PC-9 (cell line): ENCODE measurements at regions of chr6 and their contacts with region 1.

Region 1: GRCh38 chr6:13217206-13217905 is 111.0 kb downstream of the TBC1D7 start:
- DNase-seq: no peak
- H3K4me3 ChIP-seq: no peak overlapping the region
- H3K27ac ChIP-seq: no peak overlapping the region
- H3K4me1 ChIP-seq: no peaks in the 10 kb centered on the region
- H3K27me3 ChIP-seq: peaks cover 94% of the 10 kb centered on the region
- CTCF ChIP-seq: no peak

Region 2: DNA sequence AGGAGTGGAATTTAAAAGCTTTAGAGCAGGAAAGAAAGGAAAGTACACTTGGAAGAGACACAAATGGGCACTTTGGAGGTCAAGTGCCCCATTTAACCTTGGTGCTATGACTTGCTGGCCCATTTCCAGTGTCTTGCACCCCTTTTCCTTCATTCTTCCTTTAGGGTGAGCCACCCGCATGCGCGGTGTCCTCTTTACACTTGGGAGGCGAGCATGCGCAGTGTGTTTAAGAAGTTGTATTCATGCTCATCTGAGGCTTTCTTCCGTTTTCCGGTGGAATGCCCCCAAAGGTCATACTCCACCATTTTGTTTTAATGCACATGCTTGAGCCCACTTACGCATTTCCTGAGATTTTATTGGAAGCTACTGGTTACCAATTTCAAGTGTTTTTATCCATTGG is 1650.7 kb before region 1 on chr6:
- CTCF ChIA-PET with region 1: interaction called, 12 read pairs
- POLR2A ChIA-PET with region 1: no interaction called
- intact Hi-C with region 1: no loop called
- DNase-seq: peak in 1 of 2 experiments; percentile 28
- H3K4me3 ChIP-seq: no peak overlapping the region
- H3K27ac ChIP-seq: no peak overlapping the region
- H3K4me1 ChIP-seq: no peaks in the 10 kb centered on the region
- H3K27me3 ChIP-seq: no peaks in the 10 kb centered on the region
- CTCF ChIP-seq: no peak